ENCODE measurements at regions of chr7 and their contacts with region 1.

Region 1: GRCh38 chr7:23474094-23474828 is 4.0 kb upstream of the IGF2BP3 start:
- DNase-seq: peak in 6 of 9 donors; percentile 13 to 90 (median 26)
- ATAC-seq: peak; percentile 80
- H3K4me3 ChIP-seq: no peak overlapping the region
- H3K4me3 Mint-ChIP-seq: peak overlapping the region; percentile 13 to 85 (median 54)
- H3K27ac ChIP-seq: no peak overlapping the region
- H3K27ac Mint-ChIP-seq: peak overlapping the region in 5 of 9 donors; percentile 21 to 70 (median 69)
- H3K4me1 ChIP-seq: peaks cover 12 to 22% of the 10 kb centered on the region in 2 donors
- H3K4me1 Mint-ChIP-seq: peaks cover 17 to 35% (median 29%) of the 10 kb centered on the region in 7 donors
- H3K27me3 ChIP-seq: peaks cover 78 to 85% of the 10 kb centered on the region in 2 donors
- H3K27me3 Mint-ChIP-seq: peaks cover 67 to 75% (median 70%) of the 10 kb centered on the region in 5 donors

Region 2: GRCh38 chr7:23679898-23680413 is 205.7 kb after region 1 on chr7 and contains the start of gene FAM221A:
- CTCF ChIA-PET with region 1: no interaction called
- POLR2A ChIA-PET with region 1: no interaction called
- intact Hi-C with region 1: loop called in 1 of 2 experiments (anchors 2 kb)
- DNase-seq: peak; percentile 52 to 80 (median 72)
- ATAC-seq: peak; percentile 99
- H3K4me3 ChIP-seq: peak within 1 kb of the TSS; percentile 95
- H3K4me3 Mint-ChIP-seq: peak within 1 kb of the TSS; percentile 89 to 98 (median 94)
- H3K27ac ChIP-seq: peak within 1 kb of the TSS; percentile 65
- H3K27ac Mint-ChIP-seq: peak within 1 kb of the TSS; percentile 45 to 90 (median 86)
- H3K4me1 ChIP-seq: no peaks in the 10 kb centered on the region
- H3K4me1 Mint-ChIP-seq: peaks cover 0 to 32% (median 13%) of the 10 kb centered on the region in 7 donors
- H3K27me3 ChIP-seq: no peaks in the 10 kb centered on the region
- H3K27me3 Mint-ChIP-seq: peaks cover 0 to 21% (median 3%) of the 10 kb centered on the region in 5 donors
- total RNA-seq, gene FAM221A: 4.0 to 8.1 (median 5.3) TPM

Region 3: DNA sequence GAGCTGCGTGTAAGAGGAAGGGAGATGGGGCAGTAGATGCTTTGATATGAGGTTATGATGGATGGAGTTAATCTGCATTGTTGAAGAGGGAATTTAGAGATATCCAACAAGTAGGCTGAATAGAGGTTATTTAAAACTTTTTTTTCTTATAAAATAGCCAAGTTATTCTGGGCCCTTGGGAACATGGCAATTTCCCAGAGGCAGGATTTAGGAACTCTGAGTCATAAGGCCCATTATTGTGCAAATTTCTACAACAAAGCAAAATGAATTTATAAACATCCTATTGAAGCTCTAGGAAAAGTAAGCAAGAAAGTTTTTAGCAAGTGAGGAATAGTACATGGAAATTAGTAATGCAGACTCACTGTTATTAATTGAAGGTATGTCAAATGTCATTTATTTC is 648.8 kb after region 1 on chr7:
- CTCF ChIA-PET with region 1: no interaction called
- POLR2A ChIA-PET with region 1: no interaction called
- intact Hi-C with region 1: no loop called
- DNase-seq: no peak
- ATAC-seq: no peak
- H3K4me3 ChIP-seq: no peak overlapping the region
- H3K4me3 Mint-ChIP-seq: no peak overlapping the region
- H3K27ac ChIP-seq: no peak overlapping the region
- H3K27ac Mint-ChIP-seq: no peak overlapping the region
- H3K4me1 ChIP-seq: no peaks in the 10 kb centered on the region
- H3K4me1 Mint-ChIP-seq: no peaks in the 10 kb centered on the region
- H3K27me3 ChIP-seq: no peaks in the 10 kb centered on the region
- H3K27me3 Mint-ChIP-seq: peaks cover 0 to 16% (median 6%) of the 10 kb centered on the region in 5 donors

Measured in naive thymus-derived CD4-positive, alpha-beta T cell (primary cell).